Activated CD4-positive, alpha-beta T cell treated with anti-CD3 and anti-CD28 coated beads for 36 hours (primary cell): ENCODE measurements at regions of chr1 and their contacts with region 1.

Region 1: GRCh38 chr1:198520524-198521254 is 19.8 kb downstream of the ATP6V1G3 start:
- DNase-seq: peak; percentile 23
- ATAC-seq: peak; percentile 60
- H3K4me3 Mint-ChIP-seq: peak overlapping the region; percentile 64
- H3K27ac Mint-ChIP-seq: peak overlapping the region; percentile 90
- H3K4me1 Mint-ChIP-seq: peaks cover 76% of the 10 kb centered on the region
- H3K27me3 Mint-ChIP-seq: no peaks in the 10 kb centered on the region

Region 2: DNA sequence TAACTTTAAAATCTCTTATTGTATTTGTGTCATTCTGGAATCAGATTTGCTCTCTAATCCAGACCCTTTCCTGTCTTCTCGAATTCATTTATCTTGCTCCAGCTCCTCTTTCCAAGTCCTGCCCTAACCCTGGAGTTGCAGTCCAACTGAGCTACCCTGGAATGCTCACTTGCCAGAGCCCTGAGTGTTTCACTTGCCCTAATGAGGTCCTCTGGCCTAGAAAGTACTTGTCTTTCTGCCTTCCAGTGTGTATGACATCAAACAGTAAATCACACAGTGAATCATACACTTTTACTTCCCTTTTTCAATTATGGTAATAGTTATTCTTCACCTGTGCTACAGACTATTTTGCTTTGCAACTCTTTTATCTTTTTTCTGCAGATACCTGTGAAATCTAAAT is 267.0 kb before region 1 on chr1:
- CTCF ChIA-PET with region 1: no interaction called
- POLR2A ChIA-PET with region 1: no interaction called
- intact Hi-C with region 1: loop called (anchors 5 to 10 kb)
- DNase-seq: peak; percentile 22
- ATAC-seq: peak; percentile 88
- H3K4me3 Mint-ChIP-seq: peak overlapping the region; percentile 16
- H3K27ac Mint-ChIP-seq: peak overlapping the region; percentile 79
- H3K4me1 Mint-ChIP-seq: peaks cover 50% of the 10 kb centered on the region
- H3K27me3 Mint-ChIP-seq: peaks cover 2% of the 10 kb centered on the region

Region 3: GRCh38 chr1:198556971-198557370 is 36.3 kb after region 1 on chr1:
- CTCF ChIA-PET with region 1: interaction called, 5 read pairs
- POLR2A ChIA-PET with region 1: no interaction called
- intact Hi-C with region 1: loop called in 1 of 2 experiments (anchors 2 kb)
- DNase-seq: peak; percentile 71
- ATAC-seq: peak; percentile 94
- H3K4me3 Mint-ChIP-seq: peak overlapping the region; percentile 68
- H3K27ac Mint-ChIP-seq: peak overlapping the region; percentile 82
- H3K4me1 Mint-ChIP-seq: peaks cover 76% of the 10 kb centered on the region
- H3K27me3 Mint-ChIP-seq: no peaks in the 10 kb centered on the region

Region 4: GRCh38 chr1:198620951-198621824 is 100.5 kb after region 1 on chr1:
- CTCF ChIA-PET with region 1: interaction called, 12 read pairs
- POLR2A ChIA-PET with region 1: no interaction called
- intact Hi-C with region 1: loop called in 1 of 2 experiments (anchors 1 kb)
- DNase-seq: peak; percentile 84
- ATAC-seq: peak; percentile 77
- H3K4me3 Mint-ChIP-seq: peak overlapping the region; percentile 76
- H3K27ac Mint-ChIP-seq: peak overlapping the region; percentile 100
- H3K4me1 Mint-ChIP-seq: peaks cover 94% of the 10 kb centered on the region
- H3K27me3 Mint-ChIP-seq: no peaks in the 10 kb centered on the region

Region 5: DNA sequence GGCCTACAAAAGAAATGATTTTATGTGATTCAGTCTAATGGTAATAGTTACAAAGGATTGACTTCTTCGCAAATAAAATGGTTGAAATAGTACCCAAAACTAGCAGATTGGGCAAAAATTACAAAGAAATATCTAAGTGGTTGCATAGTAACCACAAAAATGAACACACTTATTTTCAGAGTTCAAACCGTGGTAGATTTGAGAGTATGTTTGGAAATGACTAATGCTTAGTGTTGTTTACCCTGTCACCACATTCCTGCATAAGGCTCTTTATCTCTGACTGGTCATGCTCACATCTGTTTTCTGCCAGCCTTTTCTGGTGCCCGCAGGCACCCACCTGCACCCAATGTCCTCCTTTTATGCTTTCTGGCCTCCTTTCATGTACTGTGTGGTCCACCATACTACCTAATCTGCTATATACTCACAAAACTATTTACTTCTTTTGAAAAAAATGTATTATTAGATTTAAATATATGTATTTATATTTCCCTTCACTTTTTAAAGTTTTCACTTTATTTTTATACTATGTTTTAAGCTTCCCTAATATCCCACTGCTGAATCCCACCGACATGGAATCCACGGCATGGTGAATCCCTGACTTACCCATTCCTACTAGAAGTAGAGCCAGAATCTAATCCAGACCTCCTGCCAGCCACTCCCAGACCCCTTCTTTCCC is 148.5 kb after region 1 on chr1:
- CTCF ChIA-PET with region 1: no interaction called
- POLR2A ChIA-PET with region 1: interaction called, 4 read pairs
- intact Hi-C with region 1: loop called in 1 of 2 experiments (anchors 1 kb)
- DNase-seq: peak; percentile 57
- ATAC-seq: peak; percentile 85
- H3K4me3 Mint-ChIP-seq: peak overlapping the region; percentile 34
- H3K27ac Mint-ChIP-seq: peak overlapping the region; percentile 77
- H3K4me1 Mint-ChIP-seq: peaks cover 90% of the 10 kb centered on the region
- H3K27me3 Mint-ChIP-seq: no peaks in the 10 kb centered on the region

Region 6: GRCh38 chr1:198929961-198930599 is 409.4 kb after region 1 on chr1:
- CTCF ChIA-PET with region 1: no interaction called
- POLR2A ChIA-PET with region 1: no interaction called
- intact Hi-C with region 1: loop called (anchors 5 to 10 kb)
- DNase-seq: no peak
- ATAC-seq: peak; percentile 82
- H3K4me3 Mint-ChIP-seq: peak overlapping the region; percentile 68
- H3K27ac Mint-ChIP-seq: peak overlapping the region; percentile 81
- H3K4me1 Mint-ChIP-seq: peaks cover 52% of the 10 kb centered on the region
- H3K27me3 Mint-ChIP-seq: no peaks in the 10 kb centered on the region

Region 7: DNA sequence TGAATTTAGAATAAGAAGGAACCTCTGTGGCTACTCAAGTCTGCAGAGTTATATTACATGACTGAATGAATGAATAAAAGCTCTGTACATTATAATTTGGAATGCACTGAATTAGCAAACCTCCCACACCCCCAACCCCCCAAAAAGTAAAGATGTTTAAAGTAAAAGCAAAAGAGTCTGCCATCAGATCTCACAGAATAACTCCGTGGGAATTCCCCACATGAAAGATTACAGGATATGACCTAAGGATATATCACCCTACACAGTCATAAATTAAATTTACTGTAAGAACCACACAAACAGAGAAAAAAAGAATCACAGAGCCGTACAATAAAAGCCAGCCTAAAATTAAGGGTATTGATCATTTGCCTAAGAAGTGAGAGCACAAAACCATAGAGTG is 705.5 kb after region 1 on chr1:
- CTCF ChIA-PET with region 1: no interaction called
- POLR2A ChIA-PET with region 1: no interaction called
- intact Hi-C with region 1: loop called in 1 of 2 experiments (anchors 2 kb)
- DNase-seq: peak; percentile 53
- ATAC-seq: peak; percentile 98
- H3K4me3 Mint-ChIP-seq: peak overlapping the region; percentile 47
- H3K27ac Mint-ChIP-seq: peak overlapping the region; percentile 78
- H3K4me1 Mint-ChIP-seq: peaks cover 25% of the 10 kb centered on the region
- H3K27me3 Mint-ChIP-seq: no peaks in the 10 kb centered on the region